Psoas muscle (tissue), 8 donors: ENCODE measurements at regions of chr12 and their contacts with region 1.

Region 1: DNA sequence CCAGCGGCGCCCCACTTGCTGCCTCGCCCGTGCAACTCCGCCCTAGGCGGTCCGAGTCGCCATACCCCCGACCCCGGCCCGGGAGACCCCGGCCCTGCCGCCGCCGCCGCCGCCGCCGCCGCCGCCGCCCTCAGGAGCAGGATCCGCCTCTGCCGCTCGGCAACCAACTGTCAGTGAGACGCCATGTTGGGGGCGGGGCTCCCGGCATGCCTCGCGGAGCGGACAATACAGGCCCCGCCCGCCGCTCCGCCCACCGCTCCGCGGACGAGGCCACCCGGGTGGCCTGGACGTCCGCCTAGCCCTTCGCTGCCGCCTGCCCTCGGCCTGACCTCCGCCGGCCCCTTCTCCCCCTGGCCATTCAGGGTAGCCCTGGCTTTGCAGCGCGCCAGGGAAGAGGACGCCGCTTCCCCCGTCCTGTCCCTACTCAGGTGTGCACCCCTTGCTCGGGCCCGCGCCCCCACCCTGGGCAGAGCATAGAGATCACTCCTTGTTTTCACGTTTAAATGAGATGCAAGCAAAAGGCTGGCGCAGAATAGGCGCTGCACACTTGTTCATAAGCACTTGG is at the start of gene HECTD4:
- DNase-seq: peak; percentile 97 to 98
- ATAC-seq: peak; percentile 97 to 99 (median 98)
- H3K4me3 ChIP-seq: peak within 1 kb of the TSS; percentile 87
- H3K27ac ChIP-seq: peak within 1 kb of the TSS; percentile 92
- H3K4me1 ChIP-seq: peaks cover 14% of the 10 kb centered on the region
- H3K27me3 ChIP-seq: no peaks in the 10 kb centered on the region
- CTCF ChIP-seq: no peak
- total RNA-seq, gene HECTD4: 14.6 to 22.8 (median 18.4) TPM

Region 2: DNA sequence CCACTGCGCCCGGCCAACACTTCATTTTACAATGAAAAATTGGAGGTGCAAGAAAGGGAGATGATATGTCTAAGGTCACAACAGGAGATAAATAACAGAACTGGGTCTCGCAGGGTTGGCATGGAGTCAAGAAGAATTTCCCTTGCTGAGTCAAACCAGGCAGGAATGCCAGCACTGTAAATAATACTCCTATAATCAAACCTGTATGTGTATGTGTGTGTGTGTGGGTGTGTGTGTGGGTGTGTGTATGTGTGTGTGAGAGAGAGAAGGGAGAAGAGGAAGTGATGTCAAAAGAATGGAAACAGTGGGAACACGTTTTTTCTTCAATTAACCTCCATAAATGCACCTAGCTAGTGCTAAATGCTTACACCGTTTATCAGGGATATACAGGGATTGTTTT is 439.8 kb before region 1 on chr12:
- intact Hi-C with region 1: loop called in 1 of 2 experiments (anchors 10 kb)
- DNase-seq: no peak
- ATAC-seq: peak in 3 of 4 donors; percentile 40 to 47 (median 41)
- H3K4me3 ChIP-seq: no peak overlapping the region
- H3K27ac ChIP-seq: no peak overlapping the region
- H3K4me1 ChIP-seq: peaks cover 5% of the 10 kb centered on the region
- H3K27me3 ChIP-seq: no peaks in the 10 kb centered on the region
- CTCF ChIP-seq: no peak

Region 3: DNA sequence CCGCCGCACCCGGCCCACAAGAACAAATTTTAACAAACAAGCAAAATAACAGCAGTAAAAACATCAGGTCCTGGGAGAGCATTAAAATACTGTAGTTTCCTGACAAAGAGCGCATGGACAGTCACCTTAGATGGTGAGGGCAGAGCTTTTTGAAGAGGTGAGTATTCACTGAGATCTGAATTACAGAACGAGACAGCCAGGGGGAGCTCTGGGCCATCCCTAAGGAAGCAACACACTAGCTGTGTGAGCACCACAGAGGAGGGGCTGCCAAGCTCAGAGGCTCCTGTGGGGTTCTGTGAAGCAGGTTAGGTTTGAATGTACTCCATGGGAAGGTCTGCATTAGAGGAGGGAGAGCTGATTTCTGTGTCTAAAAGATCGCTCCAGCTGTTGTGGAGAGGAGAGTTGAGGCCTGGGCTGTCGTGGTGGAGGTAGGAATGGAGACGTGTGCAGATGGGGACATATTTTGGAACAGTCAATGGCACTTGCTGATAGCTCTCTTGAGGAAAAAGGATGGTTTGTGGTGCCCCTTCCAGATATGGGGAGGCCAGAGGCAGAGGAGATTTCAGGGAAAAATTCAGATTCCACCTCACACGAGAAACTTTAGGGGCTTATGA is 184.1 kb before region 1 on chr12:
- intact Hi-C with region 1: loop called in 1 of 2 experiments (anchors 1 kb)
- DNase-seq: no peak
- ATAC-seq: peak; percentile 57 to 78 (median 70)
- H3K4me3 ChIP-seq: no peak overlapping the region
- H3K27ac ChIP-seq: no peak overlapping the region
- H3K4me1 ChIP-seq: no peaks in the 10 kb centered on the region
- H3K27me3 ChIP-seq: no peaks in the 10 kb centered on the region
- CTCF ChIP-seq: peak; percentile 37

Region 4: GRCh38 chr12:112283546-112283945 is 98.8 kb before region 1 on chr12:
- intact Hi-C with region 1: loop called (anchors 5 kb)
- DNase-seq: peak in 1 of 2 donors; percentile 59
- ATAC-seq: peak; percentile 76 to 96 (median 92)
- H3K4me3 ChIP-seq: peak overlapping the region; percentile 45
- H3K27ac ChIP-seq: peak overlapping the region; percentile 74
- H3K4me1 ChIP-seq: peaks cover 30% of the 10 kb centered on the region
- H3K27me3 ChIP-seq: no peaks in the 10 kb centered on the region
- CTCF ChIP-seq: no peak

Region 5: GRCh38 chr12:112294793-112295192 is 87.5 kb before region 1 on chr12:
- intact Hi-C with region 1: loop called in 1 of 2 experiments (anchors 5 kb)
- DNase-seq: no peak
- ATAC-seq: no peak
- H3K4me3 ChIP-seq: no peak overlapping the region
- H3K27ac ChIP-seq: no peak overlapping the region
- H3K4me1 ChIP-seq: peaks cover 4% of the 10 kb centered on the region
- H3K27me3 ChIP-seq: no peaks in the 10 kb centered on the region
- CTCF ChIP-seq: no peak

Region 6: GRCh38 chr12:112341046-112341825 is 41.1 kb before region 1 on chr12:
- intact Hi-C with region 1: no loop called
- DNase-seq: no peak
- ATAC-seq: no peak
- H3K4me3 ChIP-seq: no peak overlapping the region
- H3K27ac ChIP-seq: no peak overlapping the region
- H3K4me1 ChIP-seq: peaks cover 34% of the 10 kb centered on the region
- H3K27me3 ChIP-seq: no peaks in the 10 kb centered on the region
- CTCF ChIP-seq: no peak

Region 7: DNA sequence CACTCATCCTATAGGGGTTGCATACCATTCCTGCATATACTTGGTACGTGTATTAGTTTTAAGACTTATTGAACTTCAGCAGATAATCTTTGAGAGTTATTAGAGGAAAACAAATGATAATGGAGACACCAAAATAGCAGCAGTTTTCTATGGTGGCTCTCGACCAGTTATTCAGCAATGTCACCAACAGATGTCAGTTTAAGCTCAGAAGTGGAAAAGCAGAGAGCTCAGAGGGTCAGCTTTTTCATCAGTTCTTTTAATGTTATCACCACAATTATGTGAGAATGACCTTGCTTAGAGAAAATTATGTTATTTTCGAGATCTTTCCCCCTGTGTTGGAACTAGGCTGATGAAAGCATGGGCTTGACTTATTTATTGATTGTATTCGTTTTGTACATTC is 68.4 kb after region 1 on chr12:
- intact Hi-C with region 1: no loop called
- DNase-seq: no peak
- ATAC-seq: no peak
- H3K4me3 ChIP-seq: no peak overlapping the region
- H3K27ac ChIP-seq: no peak overlapping the region
- H3K4me1 ChIP-seq: no peaks in the 10 kb centered on the region
- H3K27me3 ChIP-seq: no peaks in the 10 kb centered on the region
- CTCF ChIP-seq: no peak